ENCODE measurements at regions of chr12 and their contacts with region 1.

Region 1: DNA sequence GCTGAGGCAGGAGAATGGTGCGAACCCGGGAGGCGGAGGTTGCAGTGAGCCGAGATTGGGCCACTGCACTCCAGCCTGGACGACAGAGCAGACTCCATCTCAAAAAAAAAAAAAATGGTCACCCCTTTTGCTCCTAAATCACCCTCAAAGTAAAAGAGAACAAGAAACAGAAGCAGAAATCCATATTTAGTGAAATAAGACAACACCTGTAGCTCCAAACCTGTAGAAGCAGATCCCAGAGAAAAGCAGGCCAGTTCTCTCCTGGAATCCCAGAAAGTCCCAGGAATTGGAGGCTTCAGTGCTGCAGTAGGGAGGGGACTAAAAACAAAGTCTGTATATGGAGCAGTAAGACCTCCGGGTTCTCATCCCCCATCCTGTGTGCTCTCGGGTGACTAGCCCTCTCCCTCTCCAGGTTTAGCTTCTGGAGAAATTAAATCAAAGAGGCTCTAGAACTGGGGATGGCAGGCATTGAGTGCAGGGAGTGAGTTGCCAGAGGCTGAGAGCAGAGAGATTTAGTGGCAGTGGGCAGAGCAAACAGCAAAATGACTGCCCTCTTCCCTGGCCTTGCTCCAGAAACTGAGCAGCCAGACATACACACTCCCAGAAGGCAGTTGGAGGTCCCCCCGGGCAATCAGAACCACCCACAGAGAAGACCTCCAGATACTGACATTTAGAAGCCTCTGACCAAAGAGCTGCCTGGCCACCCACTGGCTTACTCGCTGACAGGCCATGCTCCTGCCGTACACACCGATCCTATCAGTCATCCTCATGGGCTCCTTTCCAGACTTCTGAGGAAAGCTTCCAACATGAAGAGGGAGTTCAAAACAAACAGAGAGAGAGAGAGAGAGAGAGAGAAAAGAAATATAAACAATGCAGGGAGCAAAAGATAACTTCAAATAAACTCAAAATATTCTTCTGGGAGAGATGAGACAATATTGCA is 6.3 kb upstream of the MLXIP start:
- DNase-seq: peak; percentile 94
- H3K4me3 Mint-ChIP-seq: no peak overlapping the region
- H3K27ac Mint-ChIP-seq: peak overlapping the region; percentile 20
- H3K4me1 Mint-ChIP-seq: peaks cover 7% of the 10 kb centered on the region
- H3K27me3 Mint-ChIP-seq: no peaks in the 10 kb centered on the region
- CTCF ChIP-seq: no peak

Region 2: DNA sequence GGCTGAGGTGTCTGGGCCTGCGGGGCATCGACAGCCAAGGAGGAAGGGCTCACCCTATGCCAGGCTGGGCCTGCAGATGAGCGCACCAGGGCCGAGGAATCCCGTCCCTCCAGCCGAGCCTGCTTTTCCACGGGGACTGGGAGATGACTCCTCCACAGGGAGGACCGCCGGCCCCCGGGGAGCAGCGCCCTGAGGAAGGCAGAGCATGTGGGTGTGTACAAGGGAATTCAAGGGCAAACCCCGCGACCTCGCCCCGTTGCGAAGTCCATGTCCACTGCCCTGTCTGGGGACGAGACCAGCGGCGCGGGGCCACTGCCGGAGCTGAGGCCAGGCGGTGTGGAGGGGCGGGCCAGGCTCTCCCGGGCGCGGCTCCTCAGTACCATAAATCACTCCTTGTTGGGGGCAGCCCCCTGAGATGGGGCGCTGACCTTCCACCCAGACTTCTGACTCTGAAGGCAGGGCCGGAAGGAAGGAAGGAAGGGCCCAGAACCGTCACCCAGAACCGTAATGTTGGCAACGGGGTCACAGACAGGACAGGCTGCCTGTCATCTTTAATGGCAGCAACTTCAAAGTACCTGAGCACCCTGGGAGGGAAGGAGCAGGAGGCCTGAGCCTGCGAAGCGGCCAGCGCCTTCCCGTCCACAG is 619.8 kb before region 1 on chr12:
- CTCF ChIA-PET with region 1: no interaction called
- POLR2A ChIA-PET with region 1: no interaction called
- intact Hi-C with region 1: no loop called
- DNase-seq: no peak
- H3K4me3 Mint-ChIP-seq: peak overlapping the region; percentile 62
- H3K27ac Mint-ChIP-seq: no peak overlapping the region
- H3K4me1 Mint-ChIP-seq: peaks cover 4% of the 10 kb centered on the region
- H3K27me3 Mint-ChIP-seq: no peaks in the 10 kb centered on the region
- CTCF ChIP-seq: no peak

Region 3: DNA sequence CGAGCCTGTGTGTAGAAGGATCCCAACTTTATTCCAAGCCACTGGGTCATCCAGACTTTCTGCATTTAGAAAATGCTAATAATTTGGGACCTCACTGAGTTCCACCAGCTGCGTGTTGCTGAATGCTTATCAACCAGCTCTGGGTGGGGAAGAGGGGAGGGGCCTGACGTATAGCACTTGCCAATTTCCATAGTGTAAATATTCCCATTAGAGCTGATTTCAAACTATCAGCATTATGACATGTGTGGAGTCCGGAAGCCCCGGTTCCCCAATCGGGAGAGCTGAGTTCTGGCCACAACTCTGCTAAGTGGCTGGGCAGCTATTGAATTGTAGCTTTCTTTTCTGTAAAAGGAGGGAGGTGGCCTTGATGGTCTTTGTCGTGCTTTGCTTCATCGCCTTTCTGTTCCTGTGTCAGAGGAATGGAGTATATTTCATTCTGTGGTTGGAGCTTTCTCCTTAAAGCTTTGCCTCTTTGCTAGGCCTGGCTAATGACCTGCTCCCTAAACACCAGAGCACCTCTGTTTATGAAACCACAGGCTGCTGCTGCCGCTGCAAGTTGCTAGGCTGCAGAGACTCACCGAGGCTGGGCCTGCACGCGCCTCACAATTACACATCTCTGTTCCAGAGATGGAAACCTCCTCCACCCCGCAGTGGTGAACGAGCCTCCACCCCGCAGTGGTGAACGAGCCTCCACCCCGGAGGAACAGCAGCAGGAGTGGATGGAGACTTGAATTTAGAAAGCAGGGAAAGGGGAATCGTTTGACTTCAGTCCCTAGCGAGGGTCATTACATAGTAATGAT is 58.3 kb before region 1 on chr12:
- CTCF ChIA-PET with region 1: no interaction called
- POLR2A ChIA-PET with region 1: no interaction called
- intact Hi-C with region 1: no loop called
- DNase-seq: no peak
- H3K4me3 Mint-ChIP-seq: no peak overlapping the region
- H3K27ac Mint-ChIP-seq: no peak overlapping the region
- H3K4me1 Mint-ChIP-seq: no peaks in the 10 kb centered on the region
- H3K27me3 Mint-ChIP-seq: no peaks in the 10 kb centered on the region
- CTCF ChIP-seq: no peak

Region 4: DNA sequence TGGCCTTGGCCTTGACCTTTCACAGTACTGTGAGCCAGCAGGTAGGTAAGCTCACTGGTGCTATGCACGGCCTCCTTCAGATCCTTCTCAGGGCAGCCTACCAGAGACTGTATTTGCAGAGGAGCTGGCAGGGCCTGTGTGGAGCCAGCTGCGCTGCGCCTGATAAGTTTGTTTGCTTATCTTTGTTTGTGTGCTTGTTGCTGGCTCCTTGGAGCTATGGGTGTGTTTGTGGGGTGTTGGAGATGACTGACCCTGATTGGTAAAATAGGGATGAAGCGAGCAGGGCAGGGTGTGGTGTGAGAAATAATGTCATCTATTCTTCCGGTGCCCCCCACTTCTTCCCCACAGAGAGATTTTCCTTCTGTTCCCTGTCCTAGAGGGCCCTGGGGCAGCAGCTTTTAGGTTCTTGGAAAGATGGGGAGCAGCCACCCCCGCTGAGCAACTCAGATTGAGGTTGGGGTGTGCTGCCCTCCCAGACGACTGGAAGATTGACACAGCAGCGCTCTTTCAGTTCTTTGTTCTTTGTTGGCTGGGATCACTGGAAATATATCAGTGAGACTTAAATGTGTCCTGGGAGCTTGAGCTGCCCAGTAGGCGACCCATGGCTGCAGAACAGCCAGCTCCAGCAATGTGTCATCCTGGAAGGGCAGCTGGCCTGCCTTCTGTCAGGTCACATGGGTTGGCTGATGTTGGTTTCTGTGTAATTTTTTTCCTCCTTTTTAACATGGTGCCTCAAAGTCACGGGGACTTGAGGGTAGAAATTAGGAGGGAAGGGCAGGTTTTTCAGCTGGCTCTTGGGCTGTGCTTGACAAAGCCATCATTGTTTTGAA is 25.8 kb after region 1 on chr12:
- CTCF ChIA-PET with region 1: no interaction called
- POLR2A ChIA-PET with region 1: interaction called, 36 read pairs
- intact Hi-C with region 1: no loop called
- DNase-seq: no peak
- H3K4me3 Mint-ChIP-seq: peak overlapping the region; percentile 51
- H3K27ac Mint-ChIP-seq: peak overlapping the region; percentile 97
- H3K4me1 Mint-ChIP-seq: peaks cover 39% of the 10 kb centered on the region
- H3K27me3 Mint-ChIP-seq: no peaks in the 10 kb centered on the region
- CTCF ChIP-seq: no peak

Region 5: GRCh38 chr12:122107261-122107660 is 35.0 kb after region 1 on chr12:
- CTCF ChIA-PET with region 1: no interaction called
- POLR2A ChIA-PET with region 1: interaction called, 21 read pairs
- intact Hi-C with region 1: no loop called
- DNase-seq: peak; percentile 40
- H3K4me3 Mint-ChIP-seq: no peak overlapping the region
- H3K27ac Mint-ChIP-seq: peak overlapping the region; percentile 50
- H3K4me1 Mint-ChIP-seq: peaks cover 36% of the 10 kb centered on the region
- H3K27me3 Mint-ChIP-seq: no peaks in the 10 kb centered on the region
- CTCF ChIP-seq: no peak

Measured in MCF 10A (cell line).